ENCODE measurements at regions of chrX and their contacts with region 1.

Region 1: DNA sequence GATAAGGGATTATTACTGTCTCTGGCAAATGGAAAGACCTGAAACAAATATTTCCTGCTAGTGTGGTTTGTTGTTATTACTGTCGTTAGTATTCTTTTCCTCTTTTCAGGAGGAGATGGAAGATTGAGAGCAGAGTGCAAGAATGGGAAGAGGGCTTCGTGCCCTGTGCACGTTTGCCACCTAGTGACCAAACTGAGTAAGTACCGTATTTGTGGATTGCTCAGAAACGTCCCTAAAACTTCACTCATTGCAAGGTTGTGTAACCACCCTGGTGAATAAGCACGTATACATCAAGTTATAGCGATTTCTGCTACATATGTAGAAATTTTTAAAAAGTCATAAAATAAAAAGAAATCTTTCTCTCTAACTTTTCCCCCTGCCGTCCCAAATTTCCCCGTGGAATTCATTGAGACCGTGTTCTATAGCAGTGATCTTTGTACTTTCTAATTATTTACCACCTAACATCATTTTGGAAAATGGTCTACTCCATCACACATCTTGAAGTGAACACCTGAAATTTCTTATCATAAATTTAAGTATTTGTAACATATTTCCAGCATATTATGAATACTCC is 24.3 kb downstream of the LINC00632 start:
- DNase-seq: no peak
- ATAC-seq: peak in 2 of 4 donors; percentile 53 to 75
- H3K4me3 ChIP-seq: no peak overlapping the region
- H3K27ac ChIP-seq: no peak overlapping the region
- H3K4me1 ChIP-seq: no peaks in the 10 kb centered on the region
- H3K27me3 ChIP-seq: peaks cover 0 to 7% (median 0%) of the 10 kb centered on the region in 9 donors
- CTCF ChIP-seq: peak; percentile 27 to 75 (median 66)
- POLR2A ChIP-seq: no peak

Region 2: DNA sequence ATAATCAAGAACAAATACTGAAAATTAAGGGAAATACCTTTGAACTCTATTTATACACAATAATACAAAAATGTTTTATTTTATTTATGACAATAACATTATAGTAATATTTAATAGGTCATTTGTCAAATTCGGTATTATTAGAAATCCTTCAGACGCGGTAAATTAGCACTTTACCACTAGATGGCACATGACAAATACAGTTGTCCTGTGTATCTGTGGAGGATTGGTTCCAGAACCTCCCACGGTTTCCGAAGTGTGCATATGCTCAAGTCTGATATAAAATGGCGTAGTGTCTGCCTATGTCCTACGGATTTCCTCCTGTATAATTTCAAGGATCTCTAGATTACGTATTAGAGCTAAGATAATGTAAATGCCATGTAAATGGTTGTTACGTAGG is 32.4 kb before region 1 on chrX:
- intact Hi-C with region 1: loop called in 1 of 10 experiments (anchors 2 kb)
- DNase-seq: no peak
- ATAC-seq: no peak
- H3K4me3 ChIP-seq: no peak overlapping the region
- H3K27ac ChIP-seq: no peak overlapping the region
- H3K4me1 ChIP-seq: no peaks in the 10 kb centered on the region
- H3K27me3 ChIP-seq: no peaks in the 10 kb centered on the region
- CTCF ChIP-seq: peak in 10 of 12 donors; percentile 14 to 56 (median 43)
- POLR2A ChIP-seq: no peak

Region 3: GRCh38 chrX:140918407-140919038 is 184.7 kb after region 1 on chrX:
- intact Hi-C with region 1: no loop called
- DNase-seq: no peak
- ATAC-seq: no peak
- H3K4me3 ChIP-seq: no peak overlapping the region
- H3K27ac ChIP-seq: no peak overlapping the region
- H3K4me1 ChIP-seq: no peaks in the 10 kb centered on the region
- H3K27me3 ChIP-seq: peaks cover 0 to 7% (median 0%) of the 10 kb centered on the region in 9 donors
- CTCF ChIP-seq: peak in 9 of 12 donors; percentile 8 to 54 (median 35)
- POLR2A ChIP-seq: no peak